Activated CD4-positive, alpha-beta T cell treated with anti-CD3 and anti-CD28 coated beads for 36 hours (primary cell): ENCODE measurements at regions of chr9 and their contacts with region 1.

Region 1: DNA sequence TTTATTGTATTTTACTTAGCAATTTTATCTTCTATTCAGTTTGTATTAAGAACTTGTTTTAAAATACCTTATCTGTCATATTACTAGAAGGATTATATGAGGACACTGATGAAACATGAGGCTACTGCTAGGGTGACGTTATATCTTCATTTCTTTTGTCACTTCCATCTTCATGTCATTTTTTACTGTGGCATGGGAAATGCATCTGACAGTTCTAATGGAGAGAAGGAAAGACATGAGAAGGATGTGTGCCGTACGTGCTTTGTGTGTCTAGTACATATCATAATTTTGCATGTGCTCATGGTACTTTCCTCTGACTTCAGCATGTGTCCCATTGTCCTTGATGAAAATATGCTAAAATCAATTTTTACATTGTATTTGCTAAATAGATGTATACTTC is 258.2 kb downstream of the PTPRD start:
- DNase-seq: no peak
- ATAC-seq: no peak
- H3K4me3 Mint-ChIP-seq: no peak overlapping the region
- H3K27ac Mint-ChIP-seq: no peak overlapping the region
- H3K4me1 Mint-ChIP-seq: no peaks in the 10 kb centered on the region
- H3K27me3 Mint-ChIP-seq: no peaks in the 10 kb centered on the region

Region 2: GRCh38 chr9:10411272-10411671 is 56.7 kb after region 1 on chr9:
- CTCF ChIA-PET with region 1: no interaction called
- POLR2A ChIA-PET with region 1: no interaction called
- intact Hi-C with region 1: loop called in 1 of 2 experiments (anchors 10 kb)
- DNase-seq: no peak
- ATAC-seq: no peak
- H3K4me3 Mint-ChIP-seq: no peak overlapping the region
- H3K27ac Mint-ChIP-seq: no peak overlapping the region
- H3K4me1 Mint-ChIP-seq: no peaks in the 10 kb centered on the region
- H3K27me3 Mint-ChIP-seq: no peaks in the 10 kb centered on the region